H1 (cell line): ENCODE measurements at regions of chr10 and their contacts with region 1.

Region 1: GRCh38 chr10:24318517-24318916 is 109.6 kb downstream of the KIAA1217 start:
- DNase-seq: no peak
- H3K4me3 ChIP-seq: no peak overlapping the region
- H3K27ac ChIP-seq: no peak overlapping the region
- H3K4me1 ChIP-seq: no peaks in the 10 kb centered on the region
- H3K27me3 ChIP-seq: peaks cover 0 to 2% (median 0%) of the 10 kb centered on the region in 4 experiments; a peak in 1 of 7 replicates
- CTCF ChIP-seq: no peak
- EP300 ChIP-seq: no peak
- POLR2A ChIP-seq: no peak
- RAD21 ChIP-seq: no peak

Region 2: GRCh38 chr10:23994479-23995046 is 324.0 kb before region 1 on chr10:
- CTCF ChIA-PET with region 1: interaction called, 10 read pairs
- POLR2A ChIA-PET with region 1: no interaction called
- DNase-seq: peak; percentile 27 to 84
- H3K4me3 ChIP-seq: no peak overlapping the region
- H3K27ac ChIP-seq: no peak overlapping the region
- H3K4me1 ChIP-seq: no peaks in the 10 kb centered on the region
- H3K27me3 ChIP-seq: no peaks in the 10 kb centered on the region
- CTCF ChIP-seq: peak; percentile 40 to 86 (median 78)
- EP300 ChIP-seq: no peak
- POLR2A ChIP-seq: no peak
- RAD21 ChIP-seq: peak; percentile 94

Region 3: GRCh38 chr10:24223953-24224352 is 94.6 kb before region 1 on chr10:
- CTCF ChIA-PET with region 1: interaction called, 10 read pairs
- POLR2A ChIA-PET with region 1: no interaction called
- DNase-seq: no peak
- H3K4me3 ChIP-seq: no peak overlapping the region
- H3K27ac ChIP-seq: no peak overlapping the region
- H3K4me1 ChIP-seq: peaks cover 0 to 4% (median under 1%) of the 10 kb centered on the region in 4 experiments; a peak in 1 of 7 replicates
- H3K27me3 ChIP-seq: no peaks in the 10 kb centered on the region
- CTCF ChIP-seq: no peak
- EP300 ChIP-seq: no peak
- POLR2A ChIP-seq: no peak
- RAD21 ChIP-seq: no peak

Region 4: DNA sequence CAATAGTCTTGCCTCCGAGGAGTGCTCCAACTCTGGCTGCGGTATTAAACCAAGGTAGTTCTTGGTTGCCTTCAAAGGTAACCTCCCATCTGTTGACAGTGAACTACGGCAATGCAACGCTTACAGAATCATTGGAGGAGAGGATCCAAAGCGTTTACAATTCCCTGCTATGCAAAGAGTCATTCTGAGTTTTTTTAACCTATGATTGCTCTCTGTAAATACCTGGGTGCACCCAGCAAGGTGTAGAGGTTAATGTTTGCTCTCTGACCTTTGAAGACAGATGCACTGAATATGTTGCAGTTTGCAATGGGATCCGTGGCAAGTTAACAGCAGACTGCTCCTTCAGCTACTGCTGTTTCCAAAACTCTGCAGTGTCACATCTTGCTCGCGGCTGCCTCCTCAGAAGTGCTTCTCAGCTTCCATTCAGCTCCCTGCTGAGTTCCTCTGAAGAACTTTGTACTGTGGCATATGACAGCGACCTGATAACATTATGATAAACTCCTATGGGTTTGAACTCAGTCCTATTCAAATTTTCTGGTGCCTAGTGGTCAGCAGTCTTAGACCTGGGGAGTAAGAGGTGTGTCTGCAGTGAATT is 80.6 kb before region 1 on chr10:
- CTCF ChIA-PET with region 1: interaction called, 13 read pairs
- POLR2A ChIA-PET with region 1: no interaction called
- DNase-seq: no peak
- H3K4me3 ChIP-seq: peak overlapping the region in 1 of 4 experiments; percentile 1; a peak in 1 of 8 replicates
- H3K27ac ChIP-seq: no peak overlapping the region
- H3K4me1 ChIP-seq: peaks cover 4 to 26% (median 11%) of the 10 kb centered on the region in 4 experiments; a peak in 6 of 7 replicates
- H3K27me3 ChIP-seq: no peaks in the 10 kb centered on the region
- CTCF ChIP-seq: no peak
- EP300 ChIP-seq: no peak
- POLR2A ChIP-seq: peak in 1 of 2 experiments; percentile 29; a peak in 1 of 3 replicates
- RAD21 ChIP-seq: no peak

Region 5: DNA sequence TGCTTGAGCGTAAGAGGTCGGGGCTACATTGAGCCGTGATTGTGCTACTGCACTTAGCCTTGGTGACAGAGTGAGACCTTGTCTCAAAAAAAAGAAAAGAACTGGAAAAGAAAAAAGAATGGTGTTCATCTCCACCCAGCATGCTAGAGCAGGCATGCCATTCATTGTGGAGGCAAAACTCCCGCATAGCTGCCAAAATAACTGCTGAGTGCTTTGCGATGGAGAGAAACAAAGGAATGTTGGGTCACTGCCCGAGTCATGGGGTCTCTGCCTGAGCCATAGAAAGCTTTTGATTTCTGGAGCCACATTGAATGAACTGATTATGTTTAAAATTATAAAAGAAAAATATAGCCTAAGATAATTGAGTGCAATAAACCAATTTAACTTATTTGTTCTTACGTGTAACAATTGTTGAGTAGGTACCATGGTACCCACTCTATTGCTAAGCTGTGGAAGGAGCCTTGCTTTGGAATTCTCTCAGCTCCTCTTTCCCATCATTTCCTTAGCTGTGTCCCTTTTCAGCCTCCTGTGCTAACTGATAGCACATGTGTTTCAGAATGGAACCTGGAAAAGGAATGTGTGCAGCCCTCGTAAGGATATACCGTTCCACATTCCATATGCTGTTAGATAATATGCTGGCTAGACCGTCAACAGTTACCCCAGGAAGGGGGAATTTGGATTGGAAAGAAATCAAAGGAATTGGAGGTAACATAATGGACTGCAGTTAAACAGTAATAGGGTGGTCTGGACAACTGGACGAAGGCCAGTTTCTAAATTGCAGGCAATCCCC is 10.6 kb before region 1 on chr10:
- CTCF ChIA-PET with region 1: interaction called, 18 read pairs
- POLR2A ChIA-PET with region 1: no interaction called
- DNase-seq: no peak
- H3K4me3 ChIP-seq: no peak overlapping the region
- H3K27ac ChIP-seq: no peak overlapping the region
- H3K4me1 ChIP-seq: peaks cover 0 to 2% (median 0%) of the 10 kb centered on the region in 4 experiments; a peak in 2 of 7 replicates
- H3K27me3 ChIP-seq: no peaks in the 10 kb centered on the region
- CTCF ChIP-seq: no peak
- EP300 ChIP-seq: no peak
- POLR2A ChIP-seq: no peak
- RAD21 ChIP-seq: no peak

Region 6: GRCh38 chr10:24360282-24361127 is 42.0 kb after region 1 on chr10:
- CTCF ChIA-PET with region 1: interaction called, 11 read pairs
- POLR2A ChIA-PET with region 1: no interaction called
- DNase-seq: peak in 1 of 2 experiments; percentile 71
- H3K4me3 ChIP-seq: no peak overlapping the region
- H3K27ac ChIP-seq: no peak overlapping the region
- H3K4me1 ChIP-seq: peaks cover 5 to 13% (median 8%) of the 10 kb centered on the region in 4 experiments; a peak in 6 of 7 replicates
- H3K27me3 ChIP-seq: no peaks in the 10 kb centered on the region
- CTCF ChIP-seq: peak; percentile 59 to 72 (median 68)
- EP300 ChIP-seq: no peak
- POLR2A ChIP-seq: no peak
- RAD21 ChIP-seq: peak; percentile 85 to 88